Calu3 (cell line): ENCODE measurements at regions of chr10 and their contacts with region 1.

Region 1: DNA sequence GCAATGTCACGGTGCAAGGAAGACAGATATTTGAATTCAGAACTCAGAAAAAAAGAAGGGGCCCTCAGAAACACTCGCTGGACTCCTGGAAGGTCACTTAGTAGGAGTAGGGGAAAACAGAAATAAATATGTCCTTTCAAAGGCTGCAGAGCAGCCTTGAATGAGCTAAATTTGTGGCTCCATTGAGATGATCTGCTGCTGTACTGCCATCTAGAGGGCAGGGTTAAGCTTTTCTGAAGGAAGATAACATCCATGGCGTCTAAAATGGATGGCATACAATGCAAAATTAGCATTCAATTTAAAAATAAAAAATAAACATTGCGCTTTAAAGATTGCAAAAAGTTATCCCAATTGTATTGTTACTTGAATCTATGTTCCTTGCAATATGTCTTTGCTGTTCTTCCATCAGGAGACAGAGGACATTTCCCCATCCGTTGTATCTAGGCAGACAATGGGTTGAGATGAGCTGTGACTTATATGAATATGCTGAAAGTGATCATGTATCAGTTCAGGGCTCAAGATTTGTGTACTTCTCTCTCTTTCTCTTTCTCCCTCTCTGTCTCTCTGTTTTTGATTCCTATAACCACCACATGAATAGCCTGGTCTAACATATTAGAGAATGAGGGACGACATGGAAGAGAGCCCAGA is 642.2 kb downstream of the SH2D4B start:
- DNase-seq: peak; percentile 54
- H3K4me3 Mint-ChIP-seq: no peak overlapping the region
- H3K27ac Mint-ChIP-seq: no peak overlapping the region
- H3K4me1 Mint-ChIP-seq: peaks cover 10% of the 10 kb centered on the region
- H3K27me3 Mint-ChIP-seq: no peaks in the 10 kb centered on the region
- CTCF ChIP-seq: peak; percentile 29

Region 2: GRCh38 chr10:80662577-80663261 is 517.2 kb before region 1 on chr10:
- CTCF ChIA-PET with region 1: interaction called, 10 read pairs
- intact Hi-C with region 1: no loop called
- DNase-seq: peak; percentile 93
- H3K4me3 Mint-ChIP-seq: peak overlapping the region; percentile 43
- H3K27ac Mint-ChIP-seq: peak overlapping the region; percentile 18
- H3K4me1 Mint-ChIP-seq: peaks cover 10% of the 10 kb centered on the region
- H3K27me3 Mint-ChIP-seq: peaks cover 61% of the 10 kb centered on the region
- CTCF ChIP-seq: peak; percentile 89

Region 3: DNA sequence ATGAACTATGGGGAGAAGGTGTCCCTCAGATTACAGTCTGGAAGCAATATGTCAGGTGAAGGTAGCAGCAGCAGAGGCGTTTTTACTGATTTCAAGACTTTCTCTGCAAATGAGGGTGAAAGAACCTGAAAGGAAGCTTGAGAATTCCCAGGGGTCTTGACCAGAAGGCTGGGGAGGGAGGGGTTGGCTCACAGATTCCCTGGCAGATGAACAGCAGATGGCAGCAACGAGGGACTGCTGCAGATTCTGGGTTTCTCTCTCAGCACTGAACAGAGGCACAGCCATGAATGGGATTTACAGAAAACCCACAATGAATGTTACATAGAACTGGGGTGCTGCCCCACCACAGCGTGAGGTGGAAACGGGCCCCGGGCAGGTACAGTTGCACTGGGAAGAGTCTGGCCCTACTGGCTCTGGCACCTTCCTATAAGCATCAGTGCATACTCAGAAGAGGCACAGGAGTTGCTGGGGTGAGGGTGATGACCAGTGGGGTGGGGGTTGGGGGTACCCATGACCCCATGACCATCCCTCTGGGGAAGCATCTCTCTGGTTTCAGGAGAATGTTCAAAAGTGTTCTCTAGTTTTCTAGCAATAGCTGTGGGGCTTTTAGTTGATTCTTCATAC is 324.5 kb before region 1 on chr10:
- CTCF ChIA-PET with region 1: interaction called, 8 read pairs
- intact Hi-C with region 1: loop called (anchors 1 kb)
- DNase-seq: peak; percentile 44
- H3K4me3 Mint-ChIP-seq: no peak overlapping the region
- H3K27ac Mint-ChIP-seq: no peak overlapping the region
- H3K4me1 Mint-ChIP-seq: no peaks in the 10 kb centered on the region
- H3K27me3 Mint-ChIP-seq: peaks cover 55% of the 10 kb centered on the region
- CTCF ChIP-seq: peak; percentile 38

Region 4: DNA sequence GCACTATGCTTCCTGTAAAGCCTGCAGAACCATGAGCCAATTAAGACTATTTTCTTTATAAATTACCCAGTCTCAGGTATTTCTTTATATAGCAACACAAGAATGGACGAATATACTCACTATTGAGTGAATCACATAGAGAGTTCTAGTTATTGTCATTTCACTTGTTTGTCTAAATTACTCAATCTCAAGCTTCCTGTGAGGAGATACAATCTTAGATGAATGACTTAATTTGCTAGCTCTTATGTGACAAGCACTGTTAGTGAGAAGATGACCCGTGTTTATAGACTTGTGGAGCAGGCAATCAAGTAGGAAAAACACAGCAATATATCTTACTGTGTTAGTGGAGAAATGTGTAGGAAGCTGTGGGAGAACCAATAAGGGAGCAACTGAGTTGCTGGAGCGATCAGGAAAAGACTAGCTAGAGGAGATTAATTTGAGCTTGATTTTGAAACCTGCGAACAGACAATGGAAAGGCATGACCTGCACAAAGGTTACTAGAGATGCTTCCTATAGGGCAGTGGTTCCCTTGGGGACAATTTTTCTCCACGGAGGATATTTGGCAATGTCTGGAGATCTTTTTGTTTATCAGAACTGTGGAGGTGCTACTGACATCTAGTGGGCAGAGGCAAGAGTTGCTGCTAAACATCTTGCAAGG is 161.1 kb before region 1 on chr10:
- CTCF ChIA-PET with region 1: interaction called, 10 read pairs
- intact Hi-C with region 1: loop called (anchors 2 kb)
- DNase-seq: peak; percentile 52
- H3K4me3 Mint-ChIP-seq: peak overlapping the region; percentile 16
- H3K27ac Mint-ChIP-seq: no peak overlapping the region
- H3K4me1 Mint-ChIP-seq: peaks cover 8% of the 10 kb centered on the region
- H3K27me3 Mint-ChIP-seq: no peaks in the 10 kb centered on the region
- CTCF ChIP-seq: peak; percentile 76

Region 5: GRCh38 chr10:81116989-81117388 is 62.9 kb before region 1 on chr10:
- CTCF ChIA-PET with region 1: interaction called, 23 read pairs
- intact Hi-C with region 1: loop called (anchors 1 kb)
- DNase-seq: peak; percentile 21
- H3K4me3 Mint-ChIP-seq: no peak overlapping the region
- H3K27ac Mint-ChIP-seq: no peak overlapping the region
- H3K4me1 Mint-ChIP-seq: peaks cover 11% of the 10 kb centered on the region
- H3K27me3 Mint-ChIP-seq: no peaks in the 10 kb centered on the region
- CTCF ChIP-seq: no peak